K562 (cell line): ENCODE measurements at regions of chr22 and their contacts with region 1.

Region 1: GRCh38 chr22:20816559-20816958 is 42.1 kb downstream of the PI4KA start:
- DNase-seq: peak in 1 of 4 experiments; percentile 38
- ATAC-seq: no peak
- H3K4me3 ChIP-seq: no peak overlapping the region
- H3K27ac ChIP-seq: no peak overlapping the region
- H3K4me1 ChIP-seq: no peaks in the 10 kb centered on the region
- H3K27me3 ChIP-seq: no peaks in the 10 kb centered on the region
- CTCF ChIP-seq: 0 out of 6 replicates have a peak, but pooled peaks of 1 of the 3 experiments have one; percentile 5
- EP300 ChIP-seq: no peak
- POLR2A ChIP-seq: no peak
- RAD21 ChIP-seq: no peak

Region 2: GRCh38 chr22:20803696-20804324 is 12.7 kb before region 1 on chr22:
- CTCF ChIA-PET with region 1: no interaction called
- POLR2A ChIA-PET with region 1: interaction called, 172 read pairs
- in situ Hi-C with region 1: no loop called
- intact Hi-C with region 1: no loop called
- DNase-seq: peak; percentile 78 to 84 (median 84)
- ATAC-seq: peak; percentile 89
- H3K4me3 ChIP-seq: no peak overlapping the region
- H3K27ac ChIP-seq: no peak overlapping the region
- H3K4me1 ChIP-seq: peaks cover 3 to 13% of the 10 kb centered on the region in 2 experiments; a peak in 3 of 5 replicates
- H3K27me3 ChIP-seq: no peaks in the 10 kb centered on the region
- CTCF ChIP-seq: peak; percentile 94 to 100 (median 98)
- EP300 ChIP-seq: no peak
- POLR2A ChIP-seq: no peak
- RAD21 ChIP-seq: peak; percentile 95 to 99

Region 3: DNA sequence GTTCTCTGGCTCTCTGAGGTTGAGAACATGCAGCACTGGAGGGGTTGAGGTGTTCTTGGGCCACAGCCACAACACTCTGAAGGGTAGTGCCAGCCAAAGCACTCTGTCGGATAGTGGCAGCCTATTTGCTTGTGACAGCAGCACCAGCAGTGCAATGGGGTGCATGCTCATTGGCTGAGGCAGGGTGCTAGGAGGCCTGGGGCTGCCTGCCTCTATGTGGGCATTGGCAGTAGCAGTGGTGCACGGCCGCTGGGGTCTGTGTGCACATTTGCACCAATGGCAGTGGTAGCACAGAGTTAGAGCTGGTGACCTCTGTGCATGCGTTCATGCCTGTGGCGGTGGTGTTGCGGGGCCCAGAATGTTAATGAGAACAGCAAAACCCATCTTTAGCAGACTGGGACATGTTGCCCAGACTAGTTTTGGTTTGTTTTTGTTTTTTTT is 16.7 kb after region 1 on chr22:
- CTCF ChIA-PET with region 1: interaction called, 3 read pairs
- POLR2A ChIA-PET with region 1: interaction called, 172 read pairs
- in situ Hi-C with region 1: no loop called
- intact Hi-C with region 1: no loop called
- DNase-seq: peak in 2 of 4 experiments; percentile 22 to 46
- ATAC-seq: no peak
- H3K4me3 ChIP-seq: no peak overlapping the region
- H3K27ac ChIP-seq: no peak overlapping the region
- H3K4me1 ChIP-seq: peaks cover 0 to 3% of the 10 kb centered on the region in 2 experiments; a peak in 1 of 5 replicates
- H3K27me3 ChIP-seq: no peaks in the 10 kb centered on the region
- CTCF ChIP-seq: no peak
- EP300 ChIP-seq: no peak
- POLR2A ChIP-seq: no peak
- RAD21 ChIP-seq: no peak

Region 4: DNA sequence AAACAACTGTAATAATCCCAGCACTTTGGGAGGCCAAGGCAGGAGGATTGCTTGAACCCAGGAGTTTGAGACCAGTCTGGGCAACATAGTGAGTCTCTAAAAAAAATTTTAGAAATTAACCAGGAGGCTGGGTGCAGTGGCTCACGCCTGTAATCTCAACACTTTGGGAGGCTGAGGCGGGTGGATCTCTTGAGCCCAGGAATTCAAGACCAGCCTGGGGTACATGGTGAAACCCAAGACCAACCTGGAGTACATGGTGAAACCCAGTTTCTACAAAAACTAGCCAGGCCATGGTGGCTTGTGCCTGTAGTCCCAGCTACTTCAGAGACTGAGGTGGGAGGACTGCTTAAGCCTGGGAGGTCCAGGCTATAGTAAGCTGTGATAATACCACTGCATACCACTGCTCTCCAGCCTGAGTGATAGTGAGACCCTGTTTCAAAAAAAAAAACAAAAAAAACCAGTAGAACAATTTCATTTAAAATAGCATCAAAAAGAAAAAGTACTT is 30.8 kb after region 1 on chr22:
- CTCF ChIA-PET with region 1: no interaction called
- POLR2A ChIA-PET with region 1: no interaction called
- in situ Hi-C with region 1: no loop called
- intact Hi-C with region 1: no loop called
- DNase-seq: no peak
- ATAC-seq: peak; percentile 37
- H3K4me3 ChIP-seq: no peak overlapping the region
- H3K27ac ChIP-seq: no peak overlapping the region
- H3K4me1 ChIP-seq: peaks cover 18 to 22% of the 10 kb centered on the region in 2 experiments
- H3K27me3 ChIP-seq: no peaks in the 10 kb centered on the region; a peak in 1 of 5 replicates
- CTCF ChIP-seq: no peak
- EP300 ChIP-seq: no peak
- POLR2A ChIP-seq: no peak
- RAD21 ChIP-seq: no peak